Pancreas (tissue), 10 donors: ENCODE measurements at regions of chr12 and their contacts with region 1.

Region 1: DNA sequence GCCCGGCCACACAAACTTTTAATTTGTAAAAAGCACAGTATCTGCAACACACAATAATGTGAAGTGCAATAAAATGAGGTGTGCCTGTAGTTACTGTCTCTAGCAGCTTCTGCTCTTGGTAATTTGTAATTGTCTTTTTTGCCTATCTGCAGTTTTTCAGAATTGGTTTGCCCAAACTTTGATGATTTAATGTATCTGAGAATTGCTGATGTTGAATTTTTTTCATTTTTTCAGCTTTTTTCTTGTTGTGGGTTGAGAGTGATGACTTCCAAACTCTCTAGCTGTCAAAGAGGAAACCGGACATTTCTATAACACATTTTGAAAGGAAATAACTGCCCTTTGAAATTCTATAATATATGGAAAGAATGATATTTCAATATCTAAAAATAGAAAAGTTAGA is 236.9 kb downstream of the RERGL start:
- DNase-seq: no peak
- ATAC-seq: no peak
- H3K4me3 ChIP-seq: no peak overlapping the region
- H3K27ac ChIP-seq: no peak overlapping the region
- H3K4me1 ChIP-seq: no peaks in the 10 kb centered on the region
- H3K27me3 ChIP-seq: no peaks in the 10 kb centered on the region
- CTCF ChIP-seq: no peak

Region 2: GRCh38 chr12:17763366-17763765 is 89.7 kb before region 1 on chr12:
- intact Hi-C with region 1: loop called (anchors 5 kb)
- DNase-seq: no peak
- ATAC-seq: no peak
- H3K4me3 ChIP-seq: no peak overlapping the region
- H3K27ac ChIP-seq: no peak overlapping the region
- H3K4me1 ChIP-seq: no peaks in the 10 kb centered on the region
- H3K27me3 ChIP-seq: no peaks in the 10 kb centered on the region
- CTCF ChIP-seq: no peak

Region 3: DNA sequence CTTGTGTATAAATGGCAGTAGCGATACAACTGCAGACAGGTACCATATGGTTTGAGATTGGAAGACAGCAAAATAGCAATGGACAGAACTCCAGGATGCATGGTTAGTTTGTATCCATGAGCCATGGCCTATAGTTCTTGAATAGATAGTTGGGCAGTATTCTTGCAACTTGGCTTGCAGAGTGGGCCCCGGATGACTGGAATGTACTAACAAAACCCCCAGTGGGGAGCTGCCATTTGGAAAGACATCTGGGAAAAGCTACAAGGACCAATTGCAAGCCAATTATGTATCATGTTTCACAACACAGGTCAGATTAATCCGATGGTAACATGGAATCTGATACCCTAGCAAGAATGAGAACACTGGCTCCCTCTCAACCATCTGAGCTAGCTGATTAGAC is 42.7 kb before region 1 on chr12:
- intact Hi-C with region 1: no loop called
- DNase-seq: no peak
- ATAC-seq: no peak
- H3K4me3 ChIP-seq: no peak overlapping the region
- H3K27ac ChIP-seq: no peak overlapping the region
- H3K4me1 ChIP-seq: no peaks in the 10 kb centered on the region
- H3K27me3 ChIP-seq: no peaks in the 10 kb centered on the region
- CTCF ChIP-seq: no peak